SK-N-SH (cell line): ENCODE measurements at regions of chr1 and their contacts with region 1.

Region 1: GRCh38 chr1:153649863-153650235 is 8.7 kb upstream of the SNAPIN start:
- DNase-seq: no peak
- H3K4me3 ChIP-seq: no peak overlapping the region
- H3K27ac ChIP-seq: no peak overlapping the region
- H3K4me1 ChIP-seq: peaks cover 0 to 10% of the 10 kb centered on the region in 2 experiments; a peak in 1 of 4 replicates
- H3K27me3 ChIP-seq: no peaks in the 10 kb centered on the region
- CTCF ChIP-seq: no peak
- EP300 ChIP-seq: no peak
- RAD21 ChIP-seq: no peak

Region 2: DNA sequence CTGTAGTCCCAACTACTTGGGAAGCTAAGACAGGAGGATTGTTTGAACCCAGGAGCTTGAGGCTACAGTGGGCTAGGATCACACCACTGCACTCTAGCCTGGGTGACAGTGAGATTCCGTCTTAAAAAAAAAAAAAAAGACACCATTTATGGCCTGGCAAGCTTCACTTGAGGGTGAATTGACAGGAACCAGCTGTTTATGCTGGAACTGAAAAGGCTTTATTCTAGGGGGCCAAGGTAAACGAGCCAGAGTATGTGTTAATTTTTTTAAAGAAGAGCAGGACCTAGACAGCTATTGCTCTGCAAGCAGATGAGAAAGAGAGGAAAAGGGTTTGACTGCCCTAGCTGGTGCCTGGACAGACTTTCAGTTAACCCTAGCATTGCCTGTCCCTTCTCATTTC is 151.1 kb before region 1 on chr1:
- CTCF ChIA-PET with region 1: no interaction called
- POLR2A ChIA-PET with region 1: no interaction called
- DNase-seq: no peak
- H3K4me3 ChIP-seq: no peak overlapping the region
- H3K27ac ChIP-seq: no peak overlapping the region
- H3K4me1 ChIP-seq: peaks cover 0 to 3% of the 10 kb centered on the region in 2 experiments; a peak in 1 of 4 replicates
- H3K27me3 ChIP-seq: peaks cover 10% of the 10 kb centered on the region; the same call in 1 of the 2 replicates
- CTCF ChIP-seq: no peak
- EP300 ChIP-seq: no peak
- RAD21 ChIP-seq: no peak

Region 3: DNA sequence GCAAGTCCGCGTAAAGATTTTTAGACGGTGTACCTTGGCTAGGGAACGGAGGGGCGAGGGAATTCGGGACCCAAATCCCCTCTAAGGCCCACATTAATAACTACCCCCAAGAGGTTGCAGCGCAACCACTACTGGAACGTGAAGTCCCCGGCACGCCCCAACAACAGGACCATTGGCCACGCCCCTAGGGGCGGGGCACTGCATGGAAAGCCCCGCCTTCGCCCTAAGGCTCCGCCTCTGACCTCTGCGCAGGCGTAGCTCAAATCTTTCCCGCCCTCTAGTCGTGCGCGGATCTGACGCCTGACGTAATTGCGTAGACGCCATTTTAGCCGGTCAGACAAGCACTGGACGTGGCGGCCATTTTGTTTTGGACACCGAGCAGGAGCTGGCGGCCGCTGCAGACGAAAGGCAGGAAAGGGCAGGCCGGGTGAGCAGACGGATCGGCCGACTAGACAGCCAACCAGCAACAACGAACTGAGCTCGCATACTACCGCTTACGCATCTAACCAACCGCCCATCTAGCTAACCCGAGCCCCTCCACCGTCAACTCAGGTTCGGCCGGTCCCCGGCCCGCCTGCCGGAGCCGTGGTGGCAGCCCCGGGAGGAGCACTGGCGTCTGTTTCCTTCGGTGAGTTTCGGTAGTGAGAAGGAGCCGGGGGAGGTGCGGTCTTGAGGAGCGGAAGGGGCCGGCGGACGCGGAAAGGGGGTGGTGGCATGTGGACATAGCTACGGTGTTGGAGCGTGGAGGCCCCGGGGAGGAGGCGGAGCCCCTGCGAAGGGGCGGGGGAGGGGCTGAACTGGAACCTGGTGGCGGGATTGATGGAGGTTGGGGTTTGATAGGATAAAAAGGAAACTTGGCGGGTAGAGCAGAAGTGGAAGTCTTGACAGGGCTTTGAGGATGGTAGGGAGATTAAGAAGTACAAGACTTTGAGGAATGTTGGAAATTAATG is 15.9 kb before region 1 on chr1 and contains the start of gene CHTOP:
- CTCF ChIA-PET with region 1: interaction called, 4 read pairs
- POLR2A ChIA-PET with region 1: interaction called, 32 read pairs
- DNase-seq: peak; percentile 94
- H3K4me3 ChIP-seq: peak within 1 kb of the TSS; percentile 91 to 97
- H3K27ac ChIP-seq: peak within 1 kb of the TSS; percentile 100
- H3K4me1 ChIP-seq: no peaks in the 10 kb centered on the region; a peak in 1 of 4 replicates
- H3K27me3 ChIP-seq: no peaks in the 10 kb centered on the region
- CTCF ChIP-seq: no peak
- EP300 ChIP-seq: no peak
- RAD21 ChIP-seq: no peak
- polyA plus RNA-seq, gene CHTOP: 76.7 and 84.9 TPM in 2 replicates